Tibial artery (tissue), 4 donors: ENCODE measurements at regions of chr9 and their contacts with region 1.

Region 1: DNA sequence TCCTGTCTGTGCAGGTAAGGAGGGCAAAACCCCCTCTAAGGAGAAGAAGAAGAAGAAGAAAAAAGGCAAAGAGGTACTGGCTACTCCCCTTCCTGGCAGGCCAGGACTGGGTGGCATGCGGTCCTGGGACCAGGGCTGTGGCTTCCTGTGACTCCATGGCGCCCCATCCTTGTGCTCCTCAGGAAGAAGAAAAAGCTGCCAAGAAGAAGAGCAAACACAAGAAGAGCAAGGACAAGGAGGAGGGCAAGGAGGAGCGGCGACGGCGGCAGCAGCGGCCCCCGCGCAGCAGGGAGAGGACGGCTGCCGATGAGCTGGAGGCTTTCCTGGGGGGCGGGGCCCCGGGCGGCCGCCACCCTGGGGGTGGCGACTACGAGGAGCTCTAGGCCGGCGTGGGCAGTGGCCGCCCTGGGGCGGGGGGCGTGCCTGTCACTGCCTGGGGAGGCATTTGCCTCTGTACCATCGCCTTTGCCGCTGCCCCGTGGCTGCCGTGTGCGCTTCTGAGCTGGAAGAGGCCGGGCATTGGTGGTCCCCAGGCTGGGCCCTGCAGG is 2.1 kb upstream of the AJM1 start:
- DNase-seq: no peak
- H3K4me3 ChIP-seq: no peak overlapping the region
- H3K27ac ChIP-seq: no peak overlapping the region
- H3K4me1 ChIP-seq: peaks cover 0 to 49% (median 33%) of the 10 kb centered on the region in 4 donors
- H3K27me3 ChIP-seq: peaks cover 3 to 25% of the 10 kb centered on the region in 2 donors
- CTCF ChIP-seq: no peak

Region 2: GRCh38 chr9:136327313-136327974 is 512.8 kb before region 1 on chr9 and contains the start of gene GPSM1:
- intact Hi-C with region 1: no loop called
- DNase-seq: peak in 1 of 2 donors; percentile 61
- H3K4me3 ChIP-seq: peak within 1 kb of the TSS; percentile 62 to 87
- H3K27ac ChIP-seq: peak within 1 kb of the TSS; percentile 73 to 81
- H3K4me1 ChIP-seq: peaks cover 3 to 35% (median 32%) of the 10 kb centered on the region in 4 donors
- H3K27me3 ChIP-seq: no peaks in the 10 kb centered on the region
- CTCF ChIP-seq: no peak

Region 3: GRCh38 chr9:136807281-136808074 is 32.7 kb before region 1 on chr9 and contains the start of gene RABL6:
- intact Hi-C with region 1: loop called (anchors 5 kb)
- DNase-seq: peak; percentile 57 to 86
- H3K4me3 ChIP-seq: peak within 1 kb of the TSS; percentile 94 to 99
- H3K27ac ChIP-seq: peak within 1 kb of the TSS; percentile 83 to 93
- H3K4me1 ChIP-seq: peaks cover 0 to 52% (median 26%) of the 10 kb centered on the region in 4 donors
- H3K27me3 ChIP-seq: peaks cover 0 to 10% of the 10 kb centered on the region in 2 donors
- CTCF ChIP-seq: peak in 1 of 2 experiments; percentile 31

Region 4: GRCh38 chr9:137029058-137029936 is 189.1 kb after region 1 on chr9:
- intact Hi-C with region 1: loop called (anchors 5 kb)
- DNase-seq: peak; percentile 68 to 82
- H3K4me3 ChIP-seq: peak overlapping the region; percentile 57 to 60
- H3K27ac ChIP-seq: no peak overlapping the region
- H3K4me1 ChIP-seq: peaks cover 0 to 38% (median 28%) of the 10 kb centered on the region in 4 donors
- H3K27me3 ChIP-seq: peaks cover 0 to under 1% of the 10 kb centered on the region in 2 donors
- CTCF ChIP-seq: peak; percentile 75 to 85